ENCODE measurements at regions of chr10 and their contacts with region 1.

Region 1: DNA sequence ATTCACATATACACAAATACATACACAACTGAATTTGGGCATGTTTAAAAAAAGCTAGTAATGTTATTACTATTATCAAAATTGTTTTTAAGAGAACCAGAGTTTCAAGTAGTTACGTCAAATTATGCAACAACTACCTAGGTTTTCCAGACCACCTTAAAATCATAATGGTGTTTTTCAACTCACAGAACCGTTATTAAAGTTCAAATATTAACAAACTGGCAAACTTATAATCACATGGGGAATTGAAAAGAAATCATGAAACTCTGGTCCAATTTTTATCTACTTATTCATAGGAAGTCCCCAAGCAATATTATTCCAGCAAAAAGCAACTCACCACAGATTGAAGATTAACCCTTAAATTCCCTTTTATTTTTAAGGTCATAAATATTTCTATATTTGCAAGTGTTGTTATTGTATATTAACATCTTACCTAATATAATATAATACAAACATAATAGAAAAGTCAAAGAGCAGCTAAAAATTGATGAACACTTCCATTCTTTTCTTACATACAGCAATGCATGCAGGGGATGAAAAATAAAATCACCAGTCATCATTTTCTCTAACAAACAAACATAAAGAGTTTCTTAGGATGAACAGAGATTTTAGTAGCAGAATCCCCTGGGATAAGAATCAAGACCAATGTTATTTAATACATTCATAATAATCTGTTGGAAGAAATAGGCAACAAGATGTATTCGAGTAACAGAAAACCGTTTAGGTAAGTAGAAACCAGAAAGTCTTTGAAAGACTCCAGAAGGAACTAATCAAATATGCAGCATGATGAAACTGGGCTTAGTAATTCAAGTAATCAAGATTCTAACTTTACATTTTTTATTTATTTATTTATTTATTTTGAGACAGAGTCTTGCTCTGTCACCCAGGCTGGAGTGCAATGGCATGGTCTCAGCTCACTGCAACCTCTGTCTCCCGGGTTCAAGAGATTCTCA is 391.1 kb downstream of the PARD3 start:
- DNase-seq: no peak
- ATAC-seq: no peak
- H3K4me3 Mint-ChIP-seq: no peak overlapping the region
- H3K27ac Mint-ChIP-seq: no peak overlapping the region
- H3K4me1 Mint-ChIP-seq: no peaks in the 10 kb centered on the region
- H3K27me3 Mint-ChIP-seq: no peaks in the 10 kb centered on the region
- CTCF ChIP-seq: no peak

Region 2: GRCh38 chr10:34139559-34139958 is 284.4 kb before region 1 on chr10:
- CTCF ChIA-PET with region 1: no interaction called
- POLR2A ChIA-PET with region 1: no interaction called
- intact Hi-C with region 1: no loop called
- DNase-seq: no peak
- ATAC-seq: no peak
- H3K4me3 Mint-ChIP-seq: no peak overlapping the region
- H3K27ac Mint-ChIP-seq: no peak overlapping the region
- H3K4me1 Mint-ChIP-seq: peaks cover 3% of the 10 kb centered on the region
- H3K27me3 Mint-ChIP-seq: no peaks in the 10 kb centered on the region
- CTCF ChIP-seq: no peak

Region 3: GRCh38 chr10:34446049-34446448 is 22.1 kb after region 1 on chr10:
- CTCF ChIA-PET with region 1: no interaction called
- POLR2A ChIA-PET with region 1: no interaction called
- intact Hi-C with region 1: no loop called
- DNase-seq: no peak
- ATAC-seq: no peak
- H3K4me3 Mint-ChIP-seq: no peak overlapping the region
- H3K27ac Mint-ChIP-seq: no peak overlapping the region
- H3K4me1 Mint-ChIP-seq: no peaks in the 10 kb centered on the region
- H3K27me3 Mint-ChIP-seq: no peaks in the 10 kb centered on the region
- CTCF ChIP-seq: no peak

Region 4: GRCh38 chr10:34489973-34490745 is 66.2 kb after region 1 on chr10:
- CTCF ChIA-PET with region 1: no interaction called
- POLR2A ChIA-PET with region 1: no interaction called
- intact Hi-C with region 1: loop called (anchors 10 kb)
- DNase-seq: no peak
- ATAC-seq: no peak
- H3K4me3 Mint-ChIP-seq: no peak overlapping the region
- H3K27ac Mint-ChIP-seq: no peak overlapping the region
- H3K4me1 Mint-ChIP-seq: no peaks in the 10 kb centered on the region
- H3K27me3 Mint-ChIP-seq: no peaks in the 10 kb centered on the region
- CTCF ChIP-seq: no peak